IMR-90 (cell line): ENCODE measurements at regions of chr2 and their contacts with region 1.

Region 1: DNA sequence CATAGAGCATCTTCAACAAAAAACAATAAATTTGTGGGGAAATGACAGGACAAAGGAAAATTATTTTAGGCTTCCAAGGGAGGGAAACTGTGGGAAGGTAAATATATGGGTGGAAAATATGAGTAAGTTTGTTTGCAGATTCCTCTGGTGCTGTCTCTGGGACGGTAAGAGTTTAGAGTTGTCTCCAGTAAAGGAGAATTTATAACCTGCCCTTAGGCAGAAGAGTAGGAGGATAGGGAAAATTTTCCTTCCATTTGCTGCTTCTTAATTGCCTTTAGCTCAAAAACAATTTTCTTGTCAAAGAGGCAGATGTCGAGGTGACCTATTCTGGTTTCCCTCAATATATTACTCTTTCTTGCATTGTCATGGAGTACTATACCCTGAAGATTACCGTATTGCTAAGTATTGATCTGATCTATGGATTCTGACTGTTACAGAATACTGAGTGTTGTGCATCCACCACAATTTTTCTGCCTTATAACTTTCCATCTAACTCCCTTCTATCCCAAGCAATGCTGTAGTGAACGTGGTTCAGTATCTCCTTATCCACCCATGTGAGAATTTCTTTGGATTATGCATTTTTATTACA is 19.5 kb downstream of the HNMT start:
- DNase-seq: no peak
- ATAC-seq: no peak
- H3K4me3 ChIP-seq: no peak overlapping the region
- H3K27ac ChIP-seq: no peak overlapping the region
- H3K4me1 ChIP-seq: no peaks in the 10 kb centered on the region
- H3K27me3 ChIP-seq: no peaks in the 10 kb centered on the region
- CTCF ChIP-seq: no peak
- POLR2A ChIP-seq: no peak
- RAD21 ChIP-seq: no peak

Region 2: GRCh38 chr2:138016351-138017087 is 32.8 kb after region 1 on chr2:
- CTCF ChIA-PET with region 1: no interaction called
- POLR2A ChIA-PET with region 1: no interaction called
- dilution Hi-C with region 1: no loop called
- in situ Hi-C with region 1: no loop called
- intact Hi-C with region 1: loop called (anchors 2 kb)
- DNase-seq: no peak
- ATAC-seq: no peak
- H3K4me3 ChIP-seq: no peak overlapping the region
- H3K27ac ChIP-seq: no peak overlapping the region
- H3K4me1 ChIP-seq: no peaks in the 10 kb centered on the region
- H3K27me3 ChIP-seq: no peaks in the 10 kb centered on the region
- CTCF ChIP-seq: no peak
- POLR2A ChIP-seq: no peak
- RAD21 ChIP-seq: no peak

Region 3: DNA sequence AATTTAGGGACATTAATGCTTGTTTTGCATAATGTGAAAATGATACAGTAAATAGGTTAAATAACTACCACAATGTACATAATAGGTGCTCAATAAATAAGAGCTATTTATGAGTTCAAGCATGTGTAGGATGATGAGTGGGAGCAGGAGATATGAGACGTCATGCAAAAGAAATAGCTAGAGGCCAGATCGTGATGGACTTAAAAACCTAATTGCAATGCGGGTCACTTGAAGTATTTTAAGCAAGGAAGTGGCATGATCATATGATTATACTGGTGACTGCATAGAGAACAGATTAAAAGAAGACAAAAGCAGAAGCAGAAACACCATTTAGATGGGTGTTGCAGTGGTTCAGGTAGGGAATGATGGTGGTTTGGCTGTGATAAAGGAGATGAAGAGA is 58.6 kb after region 1 on chr2:
- CTCF ChIA-PET with region 1: no interaction called
- POLR2A ChIA-PET with region 1: no interaction called
- dilution Hi-C with region 1: no loop called
- in situ Hi-C with region 1: no loop called
- intact Hi-C with region 1: no loop called
- DNase-seq: no peak
- ATAC-seq: no peak
- H3K4me3 ChIP-seq: no peak overlapping the region
- H3K27ac ChIP-seq: no peak overlapping the region
- H3K4me1 ChIP-seq: no peaks in the 10 kb centered on the region
- H3K27me3 ChIP-seq: no peaks in the 10 kb centered on the region
- CTCF ChIP-seq: no peak
- POLR2A ChIP-seq: no peak
- RAD21 ChIP-seq: no peak

Region 4: GRCh38 chr2:138355244-138355643 is 371.5 kb after region 1 on chr2:
- CTCF ChIA-PET with region 1: no interaction called
- POLR2A ChIA-PET with region 1: no interaction called
- dilution Hi-C with region 1: no loop called
- in situ Hi-C with region 1: no loop called
- intact Hi-C with region 1: no loop called
- DNase-seq: no peak
- ATAC-seq: no peak
- H3K4me3 ChIP-seq: no peak overlapping the region
- H3K27ac ChIP-seq: no peak overlapping the region
- H3K4me1 ChIP-seq: no peaks in the 10 kb centered on the region
- H3K27me3 ChIP-seq: no peaks in the 10 kb centered on the region
- CTCF ChIP-seq: no peak
- POLR2A ChIP-seq: no peak
- RAD21 ChIP-seq: no peak